IMR-90 (cell line): ENCODE measurements at regions of chr13 and their contacts with region 1.

Region 1: GRCh38 chr13:106117035-106117434 is 418.4 kb downstream of the EFNB2 start:
- DNase-seq: peak; percentile 77
- ATAC-seq: no peak
- H3K4me3 ChIP-seq: no peak overlapping the region
- H3K27ac ChIP-seq: no peak overlapping the region
- H3K4me1 ChIP-seq: peaks cover 4% of the 10 kb centered on the region
- H3K27me3 ChIP-seq: no peaks in the 10 kb centered on the region
- CTCF ChIP-seq: no peak
- POLR2A ChIP-seq: no peak
- RAD21 ChIP-seq: no peak

Region 2: GRCh38 chr13:106172176-106172905 is 55.3 kb after region 1 on chr13:
- CTCF ChIA-PET with region 1: interaction called, 10 read pairs
- POLR2A ChIA-PET with region 1: no interaction called
- dilution Hi-C with region 1: no loop called
- in situ Hi-C with region 1: no loop called
- intact Hi-C with region 1: no loop called
- DNase-seq: peak; percentile 36
- ATAC-seq: peak; percentile 36
- H3K4me3 ChIP-seq: no peak overlapping the region
- H3K27ac ChIP-seq: no peak overlapping the region
- H3K4me1 ChIP-seq: peaks cover 7% of the 10 kb centered on the region
- H3K27me3 ChIP-seq: peaks cover 2% of the 10 kb centered on the region; the same call in 1 of the 2 replicates
- CTCF ChIP-seq: no peak
- POLR2A ChIP-seq: no peak
- RAD21 ChIP-seq: no peak